Common myeloid progenitor, CD34-positive (primary cell): ENCODE measurements at regions of chr16 and their contacts with region 1.

Region 1: DNA sequence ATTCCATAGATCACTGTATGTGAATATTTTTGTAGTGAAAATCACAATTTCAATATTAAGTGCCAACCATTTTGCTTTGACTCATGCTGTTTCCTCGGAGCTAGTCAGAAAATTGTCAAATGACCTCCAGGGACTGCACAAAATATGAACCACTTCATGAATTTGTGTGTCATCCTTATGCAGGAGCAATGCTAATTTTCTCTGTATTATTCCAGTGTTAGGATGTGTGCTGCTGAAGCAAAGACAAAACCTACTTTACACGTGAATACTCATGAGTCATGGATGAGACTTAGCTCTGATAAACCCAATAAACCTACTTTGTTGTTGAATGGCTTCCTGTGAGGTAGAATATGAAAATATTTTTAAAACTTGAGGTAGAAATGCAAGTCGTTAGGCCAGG is 65.2 kb downstream of the SHCBP1 start:
- DNase-seq: no peak
- H3K4me3 ChIP-seq: no peak overlapping the region
- H3K27ac ChIP-seq: no peak overlapping the region
- H3K4me1 ChIP-seq: peaks cover 0 to 2% (median 0%) of the 10 kb centered on the region in 4 experiments
- H3K27me3 ChIP-seq: peaks cover 0 to 5% (median 3%) of the 10 kb centered on the region in 5 experiments

Region 2: GRCh38 chr16:46583036-46583435 is 27.1 kb after region 1 on chr16:
- CTCF ChIA-PET with region 1: interaction called, 10 read pairs
- POLR2A ChIA-PET with region 1: no interaction called
- DNase-seq: peak in 2 of 3 donors; percentile 15 to 51
- H3K4me3 ChIP-seq: no peak overlapping the region
- H3K27ac ChIP-seq: no peak overlapping the region
- H3K4me1 ChIP-seq: no peaks in the 10 kb centered on the region
- H3K27me3 ChIP-seq: no peaks in the 10 kb centered on the region

Region 3: GRCh38 chr16:46607529-46607928 is 51.6 kb after region 1 on chr16:
- CTCF ChIA-PET with region 1: interaction called, 141 read pairs
- POLR2A ChIA-PET with region 1: no interaction called
- DNase-seq: peak; percentile 57 to 79 (median 78)
- H3K4me3 ChIP-seq: no peak overlapping the region
- H3K27ac ChIP-seq: no peak overlapping the region
- H3K4me1 ChIP-seq: no peaks in the 10 kb centered on the region
- H3K27me3 ChIP-seq: no peaks in the 10 kb centered on the region